ENCODE measurements at regions of chr1 and their contacts with region 1.

Region 1: DNA sequence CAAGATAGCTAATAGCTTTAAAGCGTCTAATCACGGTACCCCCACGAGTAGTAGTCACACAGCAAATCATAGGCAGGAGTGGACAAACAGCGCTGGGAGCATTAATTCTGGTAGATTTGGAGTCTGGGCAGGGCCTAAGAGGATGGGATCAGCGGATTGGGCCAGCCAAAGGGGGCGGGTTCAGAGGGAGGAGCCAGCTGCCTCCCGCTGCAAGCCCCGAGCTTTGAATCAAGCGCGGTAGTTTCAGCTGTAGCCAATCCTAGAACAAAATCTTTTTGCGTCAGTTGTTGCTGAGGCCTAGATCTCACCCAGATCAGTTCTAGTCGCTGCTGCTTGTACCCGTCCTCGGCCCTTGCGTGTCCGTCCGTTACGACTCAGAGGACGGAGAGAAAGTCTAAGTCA is 576 bp upstream of the NASP start:
- DNase-seq: peak; percentile 96
- H3K4me3 Mint-ChIP-seq: peak overlapping the region; percentile 99
- H3K27ac Mint-ChIP-seq: peak overlapping the region; percentile 98
- H3K4me1 Mint-ChIP-seq: peaks cover 25% of the 10 kb centered on the region
- H3K27me3 Mint-ChIP-seq: no peaks in the 10 kb centered on the region

Region 2: DNA sequence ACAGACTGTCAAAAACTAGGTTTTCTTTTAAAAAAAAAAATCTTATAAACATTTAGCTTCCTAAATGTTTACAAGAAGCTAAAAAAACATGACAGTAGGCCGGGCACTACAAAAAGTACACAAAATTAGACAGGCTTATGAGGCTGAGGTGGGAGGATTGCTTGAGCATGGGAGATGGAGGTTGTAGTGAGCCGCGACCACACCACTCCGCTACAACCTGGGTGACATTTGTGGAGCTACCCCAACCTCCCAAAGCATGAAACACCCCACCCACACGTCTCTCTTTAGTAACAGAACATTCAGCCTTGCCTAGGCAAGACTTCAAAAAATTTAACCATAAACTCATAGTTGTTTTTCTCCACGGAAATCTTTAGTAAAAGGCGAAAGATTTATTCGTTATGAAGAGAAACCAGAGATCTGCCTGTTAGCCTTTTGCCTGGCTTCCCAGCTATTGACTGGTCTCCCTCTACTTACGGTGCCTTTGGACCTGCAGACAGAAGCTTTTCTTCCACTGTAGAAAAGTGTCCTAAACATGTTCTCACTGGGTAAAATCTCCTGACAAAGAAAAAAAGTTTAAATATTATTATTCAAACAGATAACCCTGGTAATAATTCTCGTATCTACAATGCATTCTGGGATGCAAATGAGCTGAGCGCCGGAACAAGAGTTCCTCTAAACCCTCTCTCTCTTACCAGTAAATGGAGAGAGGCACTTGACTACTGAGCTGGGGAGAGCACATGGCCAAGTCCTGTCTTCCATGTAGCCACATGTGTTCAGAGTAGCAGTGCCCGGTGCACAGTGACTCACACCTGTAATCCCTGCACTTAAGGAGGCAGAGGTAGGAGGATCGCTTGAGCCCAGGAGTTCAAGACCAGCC is 861.5 kb before region 1 on chr1:
- CTCF ChIA-PET with region 1: no interaction called
- POLR2A ChIA-PET with region 1: no interaction called
- intact Hi-C with region 1: loop called (anchors 10 kb)
- DNase-seq: peak; percentile 91
- H3K4me3 Mint-ChIP-seq: peak overlapping the region; percentile 66
- H3K27ac Mint-ChIP-seq: peak overlapping the region; percentile 96
- H3K4me1 Mint-ChIP-seq: peaks cover 77% of the 10 kb centered on the region
- H3K27me3 Mint-ChIP-seq: peaks cover 4% of the 10 kb centered on the region

Region 3: DNA sequence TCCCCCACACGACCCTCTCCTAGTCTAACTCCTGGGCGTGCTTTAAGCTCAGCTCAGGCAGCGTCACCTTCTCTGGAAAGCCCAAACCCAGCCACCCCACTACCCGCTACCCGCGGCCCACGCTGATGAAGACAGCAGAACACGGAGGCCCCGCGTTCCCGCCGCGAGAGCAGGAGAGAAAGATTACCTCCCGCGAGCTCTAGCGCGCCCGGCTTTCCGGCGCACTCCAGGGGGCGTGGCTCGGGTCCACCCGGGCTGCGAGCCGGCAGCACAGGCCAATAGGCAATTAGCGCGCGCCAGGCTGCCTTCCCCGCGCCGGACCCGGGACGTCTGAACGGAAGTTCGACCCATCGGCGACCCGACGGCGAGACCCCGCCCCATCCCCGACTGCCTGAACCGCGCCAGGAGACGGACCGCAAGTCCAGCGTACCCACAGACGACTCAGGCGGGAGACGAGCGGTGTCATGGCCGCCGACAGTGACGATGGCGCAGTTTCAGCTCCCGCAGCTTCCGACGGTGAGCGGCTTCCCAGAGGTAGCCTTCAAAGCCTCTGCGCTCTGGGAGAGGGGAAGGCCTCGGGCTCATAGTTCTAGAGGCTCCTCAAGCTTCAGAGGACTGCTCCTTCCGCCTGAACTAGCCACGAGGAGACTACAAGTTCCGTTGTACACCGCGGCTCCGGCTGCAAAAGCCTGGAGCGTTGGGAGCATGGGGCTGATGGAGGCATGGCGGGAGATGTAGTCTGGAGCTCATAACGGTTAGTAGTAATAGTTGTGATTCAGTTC is 243.3 kb before region 1 on chr1 and contains the starts of genes MUTYH and TOE1:
- CTCF ChIA-PET with region 1: interaction called, 3 read pairs
- POLR2A ChIA-PET with region 1: interaction called, 17 read pairs
- intact Hi-C with region 1: loop called (anchors 1 kb)
- DNase-seq: peak; percentile 97
- H3K4me3 Mint-ChIP-seq: peak within 1 kb of the TSS; percentile 93
- H3K27ac Mint-ChIP-seq: peak within 1 kb of the TSS; percentile 98
- H3K4me1 Mint-ChIP-seq: peaks cover 34% of the 10 kb centered on the region
- H3K27me3 Mint-ChIP-seq: no peaks in the 10 kb centered on the region
- total RNA-seq, gene MUTYH: 49.2 to 51.8 TPM
- total RNA-seq, gene TOE1: 22.8 to 23.1 TPM

Region 4: DNA sequence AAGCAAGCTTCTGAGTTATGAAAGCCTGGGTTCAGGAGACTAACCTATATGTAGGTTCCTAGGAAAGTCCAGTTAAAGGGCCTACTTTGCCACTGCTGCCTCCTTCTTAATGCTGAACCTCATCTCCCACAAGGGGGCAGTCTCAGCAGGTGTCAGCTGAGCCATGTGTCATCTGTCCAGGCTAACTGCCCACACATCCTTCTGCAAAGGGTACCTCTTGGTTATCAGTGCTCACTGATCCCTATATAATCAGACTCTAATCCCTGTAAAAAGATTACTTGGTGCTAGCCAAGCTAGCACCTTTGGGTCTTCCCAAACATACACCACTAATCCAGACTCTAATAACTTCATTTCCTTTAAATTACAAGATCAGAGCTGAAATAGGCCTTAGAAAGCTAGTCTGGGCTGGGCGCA is 70.6 kb before region 1 on chr1:
- CTCF ChIA-PET with region 1: interaction called, 9 read pairs
- POLR2A ChIA-PET with region 1: interaction called, 3 read pairs
- intact Hi-C with region 1: loop called (anchors 1 kb)
- DNase-seq: peak; percentile 72
- H3K4me3 Mint-ChIP-seq: no peak overlapping the region
- H3K27ac Mint-ChIP-seq: peak overlapping the region; percentile 73
- H3K4me1 Mint-ChIP-seq: peaks cover 20% of the 10 kb centered on the region
- H3K27me3 Mint-ChIP-seq: no peaks in the 10 kb centered on the region

Region 5: GRCh38 chr1:45550401-45551351 is 32.6 kb before region 1 on chr1 and contains the start of gene AKR1A1:
- CTCF ChIA-PET with region 1: interaction called, 3 read pairs
- POLR2A ChIA-PET with region 1: interaction called, 12 read pairs
- intact Hi-C with region 1: loop called (anchors 1 kb)
- DNase-seq: peak; percentile 92
- H3K4me3 Mint-ChIP-seq: peak within 1 kb of the TSS; percentile 94
- H3K27ac Mint-ChIP-seq: peak within 1 kb of the TSS; percentile 91
- H3K4me1 Mint-ChIP-seq: peaks cover 19% of the 10 kb centered on the region
- H3K27me3 Mint-ChIP-seq: no peaks in the 10 kb centered on the region
- total RNA-seq, gene AKR1A1: 184 TPM

Region 6: DNA sequence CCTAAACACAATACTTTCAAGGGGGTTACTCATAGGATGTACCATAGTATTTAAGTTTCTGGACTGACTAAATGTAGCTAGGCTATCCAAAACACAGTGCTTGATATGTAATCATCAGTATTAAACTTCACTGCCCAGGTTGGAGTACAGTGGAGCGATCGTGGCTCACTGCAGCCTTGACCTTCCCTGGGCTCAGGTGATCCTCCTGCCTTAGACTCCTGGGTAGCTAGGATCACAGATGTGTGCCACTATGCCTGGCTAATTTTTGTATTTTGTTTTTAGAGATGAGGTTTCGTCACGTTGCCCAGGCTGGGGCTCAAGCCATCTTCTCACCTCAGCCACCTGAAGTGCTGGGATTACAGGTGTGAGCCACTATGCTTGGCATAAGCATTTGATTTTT is 11.1 kb after region 1 on chr1:
- CTCF ChIA-PET with region 1: no interaction called
- POLR2A ChIA-PET with region 1: no interaction called
- intact Hi-C with region 1: no loop called
- DNase-seq: no peak
- H3K4me3 Mint-ChIP-seq: no peak overlapping the region
- H3K27ac Mint-ChIP-seq: no peak overlapping the region
- H3K4me1 Mint-ChIP-seq: peaks cover 23% of the 10 kb centered on the region
- H3K27me3 Mint-ChIP-seq: no peaks in the 10 kb centered on the region

Region 7: GRCh38 chr1:45750298-45751038 is 167.2 kb after region 1 on chr1 and contains the start of gene IPP:
- CTCF ChIA-PET with region 1: no interaction called
- POLR2A ChIA-PET with region 1: interaction called, 3 read pairs
- intact Hi-C with region 1: loop called (anchors 1 kb)
- DNase-seq: peak; percentile 97
- H3K4me3 Mint-ChIP-seq: peak within 1 kb of the TSS; percentile 91
- H3K27ac Mint-ChIP-seq: peak within 1 kb of the TSS; percentile 95
- H3K4me1 Mint-ChIP-seq: peaks cover 33% of the 10 kb centered on the region
- H3K27me3 Mint-ChIP-seq: no peaks in the 10 kb centered on the region
- total RNA-seq, gene IPP: 21.4 to 22.9 TPM

Region 8: DNA sequence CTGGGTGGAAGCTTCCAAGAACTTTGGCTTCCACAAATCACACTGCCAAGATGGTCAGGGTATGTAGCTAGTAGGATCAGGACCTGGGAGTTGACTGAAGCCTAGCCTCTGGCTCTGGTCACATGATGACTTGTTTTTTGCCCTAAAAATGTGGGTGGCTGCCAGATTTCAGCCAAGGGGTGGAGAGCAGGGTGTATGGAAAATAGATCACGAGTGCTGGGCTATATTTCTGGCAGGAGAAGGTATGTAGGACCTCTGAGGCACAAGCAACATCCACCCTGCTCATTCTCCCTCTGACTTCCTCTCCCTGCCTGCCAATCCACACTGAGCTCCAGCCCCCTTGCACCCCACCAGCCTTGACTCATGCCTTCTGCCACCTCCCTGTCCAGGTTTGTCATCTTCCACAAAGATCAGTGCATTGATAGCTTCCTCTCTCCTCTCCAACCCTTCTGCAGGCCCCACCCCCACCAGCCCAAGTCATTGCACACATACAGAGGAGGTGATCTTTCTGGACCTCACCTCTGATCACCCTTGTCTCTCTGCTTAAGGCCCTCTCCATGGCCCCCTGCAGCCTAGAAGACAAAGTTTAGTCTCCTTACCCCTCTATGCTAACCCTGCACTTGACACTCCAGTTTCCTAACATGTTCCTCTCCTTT is 1207.3 kb after region 1 on chr1:
- CTCF ChIA-PET with region 1: no interaction called
- POLR2A ChIA-PET with region 1: no interaction called
- intact Hi-C with region 1: no loop called
- DNase-seq: no peak
- H3K4me3 Mint-ChIP-seq: no peak overlapping the region
- H3K27ac Mint-ChIP-seq: no peak overlapping the region
- H3K4me1 Mint-ChIP-seq: no peaks in the 10 kb centered on the region
- H3K27me3 Mint-ChIP-seq: peaks cover 18% of the 10 kb centered on the region

Measured in activated CD4-positive, alpha-beta memory T cell treated with anti-CD3 and anti-CD28 coated beads for 36 hours (primary cell).